Heart left ventricle (tissue), 16 donors: ENCODE measurements at regions of chr2 and their contacts with region 1.

Region 1: GRCh38 chr2:105438104-105438929 is 39.5 kb upstream of the FHL2 start:
- DNase-seq: peak; percentile 74 to 92 (median 84)
- ATAC-seq: peak; percentile 86 to 91 (median 88)
- H3K4me3 ChIP-seq: peak overlapping the region; percentile 34 to 69 (median 55)
- H3K27ac ChIP-seq: peak overlapping the region; percentile 72 to 97 (median 90)
- H3K4me1 ChIP-seq: peaks cover 0 to 20% (median 0%) of the 10 kb centered on the region in 12 donors
- H3K27me3 ChIP-seq: no peaks in the 10 kb centered on the region
- CTCF ChIP-seq: no peak
- POLR2A ChIP-seq: peak; percentile 49 to 94

Region 2: DNA sequence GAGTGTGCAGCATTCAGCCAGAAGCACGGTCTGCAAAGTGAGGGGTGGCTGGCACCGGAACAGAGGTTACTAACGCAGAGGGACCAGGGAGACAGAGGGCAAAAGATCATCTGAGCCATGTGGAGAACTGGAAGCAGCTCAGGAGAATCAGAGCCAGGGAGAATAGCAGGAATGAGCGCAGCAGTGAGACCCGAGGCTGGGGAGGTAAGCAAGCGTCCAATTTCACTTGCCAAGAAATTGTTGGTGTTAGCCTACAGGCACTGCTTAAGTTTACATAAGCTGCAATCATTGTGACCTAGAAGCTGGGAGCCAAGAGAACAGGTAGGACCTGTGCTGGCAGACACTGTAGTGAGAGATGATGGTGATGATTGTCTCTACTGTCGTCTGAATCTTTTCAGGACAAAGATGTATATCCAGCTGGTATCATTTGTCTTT is 956.9 kb before region 1 on chr2:
- intact Hi-C with region 1: no loop called
- DNase-seq: no peak
- ATAC-seq: no peak
- H3K4me3 ChIP-seq: no peak overlapping the region
- H3K27ac ChIP-seq: no peak overlapping the region
- H3K4me1 ChIP-seq: no peaks in the 10 kb centered on the region
- H3K27me3 ChIP-seq: peaks cover 0 to 10% (median 0%) of the 10 kb centered on the region in 9 donors
- CTCF ChIP-seq: no peak
- POLR2A ChIP-seq: no peak

Region 3: DNA sequence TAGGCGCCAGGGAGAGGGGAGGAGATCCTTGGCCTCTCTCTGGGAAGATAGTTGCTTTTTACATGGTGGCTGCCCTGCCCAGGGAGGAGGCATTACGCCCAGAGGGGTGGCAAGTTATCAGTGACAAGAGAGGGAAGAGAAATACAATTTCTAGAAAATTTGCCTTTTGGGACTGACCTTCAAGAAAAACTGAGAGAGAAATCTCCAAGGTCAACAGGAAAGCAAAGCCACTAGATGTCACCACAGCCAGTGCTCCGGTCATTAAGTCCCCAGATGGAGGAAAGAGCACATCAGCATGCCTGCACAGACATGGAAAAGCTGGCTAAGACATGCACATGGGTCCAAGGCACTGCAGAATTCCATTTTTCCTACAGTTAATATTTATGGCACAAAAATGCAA is 60.5 kb before region 1 on chr2:
- intact Hi-C with region 1: loop called in 1 of 10 experiments (anchors 5 kb)
- DNase-seq: peak in 2 of 5 donors; percentile 22 to 26
- ATAC-seq: no peak
- H3K4me3 ChIP-seq: no peak overlapping the region
- H3K27ac ChIP-seq: peak overlapping the region in 11 of 12 donors; percentile 12 to 94 (median 76)
- H3K4me1 ChIP-seq: peaks cover 3 to 100% (median 81%) of the 10 kb centered on the region in 12 donors
- H3K27me3 ChIP-seq: no peaks in the 10 kb centered on the region
- CTCF ChIP-seq: peak in 5 of 12 donors; percentile 11 to 44 (median 31)
- POLR2A ChIP-seq: peak in 1 of 2 donors; percentile 9

Region 4: GRCh38 chr2:105496271-105496670 is 58.0 kb after region 1 on chr2:
- intact Hi-C with region 1: loop called in 1 of 10 experiments (anchors 5 kb)
- DNase-seq: peak; percentile 39 to 74 (median 64)
- ATAC-seq: peak; percentile 77 to 83 (median 80)
- H3K4me3 ChIP-seq: no peak overlapping the region
- H3K27ac ChIP-seq: peak overlapping the region; percentile 70 to 97 (median 86)
- H3K4me1 ChIP-seq: peaks cover 0 to 60% (median 27%) of the 10 kb centered on the region in 12 donors
- H3K27me3 ChIP-seq: no peaks in the 10 kb centered on the region
- CTCF ChIP-seq: no peak
- POLR2A ChIP-seq: no peak

Region 5: DNA sequence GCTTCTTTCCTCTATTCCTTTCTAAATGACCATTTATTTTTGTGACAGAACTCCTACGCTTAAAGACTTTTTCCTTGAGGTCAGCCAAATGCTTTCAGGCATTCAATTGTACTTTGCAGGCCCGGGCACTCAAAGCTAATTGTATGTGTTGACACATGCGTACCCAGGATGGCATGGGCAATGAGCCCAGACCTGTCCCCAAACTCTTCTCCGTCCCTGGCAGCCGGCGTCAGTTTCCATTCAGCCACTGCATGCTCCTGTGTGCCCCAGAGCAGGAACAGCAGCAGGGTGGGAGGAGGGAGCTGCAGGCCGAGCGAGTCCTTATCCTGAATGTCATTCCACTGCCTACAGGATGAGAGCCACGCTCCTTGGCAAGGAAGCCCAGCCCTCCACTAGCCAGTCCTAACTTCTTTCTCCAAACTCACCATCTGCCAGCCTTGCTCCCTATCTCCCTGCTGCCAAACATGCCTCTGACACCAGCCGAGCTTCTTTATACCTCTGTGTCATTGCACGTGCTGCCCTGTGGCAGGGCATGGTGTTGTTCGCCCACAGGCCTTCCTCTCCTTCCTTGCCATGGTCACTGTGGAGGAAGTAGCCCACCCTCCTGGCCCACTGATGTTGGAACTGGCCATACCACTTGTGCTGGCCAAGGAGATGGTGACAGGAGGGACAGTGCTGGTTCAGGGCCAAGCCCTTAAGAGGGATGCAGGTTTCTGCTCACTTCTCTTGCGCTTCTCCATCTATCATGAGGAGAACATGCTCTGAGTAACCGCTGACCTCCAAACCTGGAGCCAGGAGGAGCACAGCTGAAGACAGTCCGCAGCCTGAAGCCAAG is 77.5 kb after region 1 on chr2:
- intact Hi-C with region 1: loop called in 6 of 10 experiments (anchors 2 to 10 kb)
- DNase-seq: peak; percentile 86 to 97 (median 89)
- ATAC-seq: peak; percentile 79 to 88 (median 84)
- H3K4me3 ChIP-seq: no peak overlapping the region
- H3K27ac ChIP-seq: peak overlapping the region; percentile 65 to 93 (median 80)
- H3K4me1 ChIP-seq: peaks cover 0 to 65% (median 25%) of the 10 kb centered on the region in 12 donors
- H3K27me3 ChIP-seq: no peaks in the 10 kb centered on the region
- CTCF ChIP-seq: no peak
- POLR2A ChIP-seq: no peak

Region 6: GRCh38 chr2:105521205-105521604 is 82.9 kb after region 1 on chr2:
- intact Hi-C with region 1: loop called in 5 of 10 experiments (anchors 2 to 10 kb)
- DNase-seq: no peak
- ATAC-seq: no peak
- H3K4me3 ChIP-seq: no peak overlapping the region
- H3K27ac ChIP-seq: peak overlapping the region in 6 of 12 donors; percentile 28 to 89 (median 42)
- H3K4me1 ChIP-seq: peaks cover 0 to 39% (median 19%) of the 10 kb centered on the region in 12 donors
- H3K27me3 ChIP-seq: no peaks in the 10 kb centered on the region
- CTCF ChIP-seq: peak; percentile 44 to 74 (median 64)
- POLR2A ChIP-seq: no peak